WTC11 (cell line): ENCODE measurements at regions of chr10 and their contacts with region 1.

Region 1: GRCh38 chr10:34637418-34637911 is 177.6 kb downstream of the PARD3 start:
- DNase-seq: peak; percentile 89
- ATAC-seq: peak; percentile 65
- H3K4me3 Mint-ChIP-seq: no peak overlapping the region; the same call in 1 of the 2 replicates
- H3K27ac Mint-ChIP-seq: peak overlapping the region; percentile 41
- H3K4me1 Mint-ChIP-seq: peaks cover 60% of the 10 kb centered on the region
- H3K27me3 Mint-ChIP-seq: no peaks in the 10 kb centered on the region
- CTCF ChIP-seq: peak; percentile 97

Region 2: GRCh38 chr10:34526758-34527730 is 110.4 kb before region 1 on chr10:
- CTCF ChIA-PET with region 1: interaction called, 22 read pairs
- POLR2A ChIA-PET with region 1: no interaction called
- DNase-seq: no peak
- ATAC-seq: peak; percentile 78
- H3K4me3 Mint-ChIP-seq: peak overlapping the region; percentile 20; the same call in 1 of the 2 replicates
- H3K27ac Mint-ChIP-seq: peak overlapping the region; percentile 93
- H3K4me1 Mint-ChIP-seq: peaks cover 58% of the 10 kb centered on the region
- H3K27me3 Mint-ChIP-seq: no peaks in the 10 kb centered on the region
- CTCF ChIP-seq: no peak

Region 3: GRCh38 chr10:34655286-34656170 is 18.1 kb after region 1 on chr10:
- CTCF ChIA-PET with region 1: interaction called, 12 read pairs
- POLR2A ChIA-PET with region 1: no interaction called
- DNase-seq: peak; percentile 57
- ATAC-seq: peak; percentile 48
- H3K4me3 Mint-ChIP-seq: no peak overlapping the region; the same call in 1 of the 2 replicates
- H3K27ac Mint-ChIP-seq: peak overlapping the region; percentile 88
- H3K4me1 Mint-ChIP-seq: peaks cover 89% of the 10 kb centered on the region
- H3K27me3 Mint-ChIP-seq: no peaks in the 10 kb centered on the region
- CTCF ChIP-seq: peak; percentile 64